Activated CD8-positive, alpha-beta T cell treated with anti-CD3 and anti-CD28 coated beads for 36 hours (primary cell): ENCODE measurements at regions of chr12 and their contacts with region 1.

Region 1: GRCh38 chr12:122871851-122872780 is 23.8 kb downstream of the VPS37B start:
- DNase-seq: peak; percentile 86
- ATAC-seq: peak; percentile 57
- H3K4me3 Mint-ChIP-seq: peak overlapping the region; percentile 47
- H3K27ac Mint-ChIP-seq: peak overlapping the region; percentile 51
- H3K4me1 Mint-ChIP-seq: peaks cover 59% of the 10 kb centered on the region
- H3K27me3 Mint-ChIP-seq: peaks cover 2% of the 10 kb centered on the region
- CTCF ChIP-seq: no peak

Region 2: DNA sequence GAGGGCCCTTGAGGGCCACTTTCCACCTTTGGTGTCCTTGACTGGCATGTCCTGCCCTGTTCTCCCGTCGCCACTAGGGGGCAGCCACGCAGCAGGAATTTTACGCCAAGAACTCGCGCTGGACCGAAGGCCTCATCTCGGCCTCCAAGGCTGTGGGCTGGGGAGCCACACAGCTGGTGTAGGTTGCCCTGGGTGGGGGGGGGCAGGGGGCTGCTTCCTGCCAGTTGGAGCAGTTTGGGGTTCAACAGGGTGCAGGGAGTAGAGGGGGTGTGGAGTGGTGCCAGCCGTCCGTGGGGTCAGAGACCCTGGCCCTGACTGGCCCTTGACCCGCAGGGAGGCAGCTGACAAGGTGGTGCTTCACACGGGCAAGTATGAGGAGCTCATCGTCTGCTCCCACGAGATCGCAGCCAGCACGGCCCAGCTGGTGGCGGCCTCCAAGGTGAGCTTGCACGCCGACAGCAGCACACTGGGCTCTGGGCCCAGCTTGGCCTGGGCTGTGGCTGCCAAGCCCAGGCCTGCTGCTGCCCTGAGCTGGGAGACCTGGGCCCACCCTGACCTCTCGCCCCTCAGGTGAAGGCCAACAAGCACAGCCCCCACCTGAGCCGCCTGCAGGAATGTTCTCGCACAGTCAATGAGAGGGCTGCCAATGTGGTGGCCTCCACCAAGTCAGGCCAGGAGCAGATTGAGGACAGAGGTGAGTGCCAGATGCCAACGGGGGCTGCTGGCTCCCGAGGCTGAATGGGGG is 11.6 kb before region 1 on chr12:
- CTCF ChIA-PET with region 1: interaction called, 55 read pairs
- POLR2A ChIA-PET with region 1: interaction called, 3 read pairs
- intact Hi-C with region 1: no loop called
- DNase-seq: peak; percentile 88
- ATAC-seq: peak; percentile 83
- H3K4me3 Mint-ChIP-seq: no peak overlapping the region
- H3K27ac Mint-ChIP-seq: no peak overlapping the region
- H3K4me1 Mint-ChIP-seq: no peaks in the 10 kb centered on the region
- H3K27me3 Mint-ChIP-seq: no peaks in the 10 kb centered on the region
- CTCF ChIP-seq: peak; percentile 91

Region 3: GRCh38 chr12:122888232-122888867 is 16.2 kb after region 1 on chr12:
- CTCF ChIA-PET with region 1: interaction called, 30 read pairs
- POLR2A ChIA-PET with region 1: interaction called, 239 read pairs
- intact Hi-C with region 1: no loop called
- DNase-seq: peak; percentile 65
- ATAC-seq: peak; percentile 55
- H3K4me3 Mint-ChIP-seq: peak overlapping the region; percentile 69
- H3K27ac Mint-ChIP-seq: peak overlapping the region; percentile 93
- H3K4me1 Mint-ChIP-seq: peaks cover 93% of the 10 kb centered on the region
- H3K27me3 Mint-ChIP-seq: no peaks in the 10 kb centered on the region
- CTCF ChIP-seq: no peak

Region 4: GRCh38 chr12:122895705-122896636 is 23.9 kb after region 1 on chr12 and contains the start of gene VPS37B:
- CTCF ChIA-PET with region 1: interaction called, 6 read pairs
- POLR2A ChIA-PET with region 1: interaction called, 239 read pairs
- intact Hi-C with region 1: no loop called
- DNase-seq: peak; percentile 93
- ATAC-seq: peak; percentile 57
- H3K4me3 Mint-ChIP-seq: peak within 1 kb of the TSS; percentile 96
- H3K27ac Mint-ChIP-seq: peak within 1 kb of the TSS; percentile 91
- H3K4me1 Mint-ChIP-seq: peaks cover 85% of the 10 kb centered on the region
- H3K27me3 Mint-ChIP-seq: peaks cover 3% of the 10 kb centered on the region
- CTCF ChIP-seq: no peak
- total RNA-seq, gene VPS37B: 17.8 to 18.4 TPM

Region 5: GRCh38 chr12:122984612-122985337 is 112.7 kb after region 1 on chr12:
- CTCF ChIA-PET with region 1: no interaction called
- POLR2A ChIA-PET with region 1: no interaction called
- intact Hi-C with region 1: no loop called
- DNase-seq: no peak
- ATAC-seq: no peak
- H3K4me3 Mint-ChIP-seq: no peak overlapping the region
- H3K27ac Mint-ChIP-seq: peak overlapping the region; percentile 85
- H3K4me1 Mint-ChIP-seq: peaks cover 34% of the 10 kb centered on the region
- H3K27me3 Mint-ChIP-seq: no peaks in the 10 kb centered on the region
- CTCF ChIP-seq: no peak